HCT116 (cell line): ENCODE measurements at regions of chr4 and their contacts with region 1.

Region 1: DNA sequence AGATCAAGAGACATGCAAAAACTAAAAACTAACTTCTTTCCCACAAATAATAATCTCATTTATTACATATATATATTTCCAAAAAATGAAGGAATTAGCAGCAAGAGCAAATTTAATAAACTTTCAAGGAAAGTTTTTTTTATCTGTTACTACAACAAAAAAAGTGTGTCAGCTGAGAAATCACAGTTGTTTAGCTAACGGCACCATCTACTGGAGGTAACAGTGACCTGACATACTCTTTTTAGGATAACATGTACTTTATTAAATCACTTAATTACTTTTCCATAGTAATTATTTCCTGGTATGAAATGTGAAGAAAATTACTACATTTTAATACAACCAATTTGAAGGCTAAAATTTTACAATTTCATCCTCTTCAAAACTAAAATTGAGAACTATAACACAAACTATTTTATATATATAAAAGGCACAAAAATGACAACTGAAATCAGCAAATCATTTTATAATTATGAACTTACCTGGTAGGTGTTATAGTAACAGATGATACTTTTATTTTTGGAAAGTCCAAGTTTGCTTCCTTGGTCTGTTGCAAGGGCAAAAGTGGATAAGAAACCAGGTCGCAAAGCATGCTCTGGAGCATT is 9.1 kb downstream of the LAMTOR3 start:
- DNase-seq: peak; percentile 22
- ATAC-seq: no peak
- H3K4me3 ChIP-seq: no peak overlapping the region
- H3K27ac ChIP-seq: no peak overlapping the region
- H3K4me1 ChIP-seq: no peaks in the 10 kb centered on the region
- H3K27me3 ChIP-seq: no peaks in the 10 kb centered on the region
- CTCF ChIP-seq: peak; percentile 49 to 71 (median 62); a peak in 5 of 6 replicates
- POLR2A ChIP-seq: no peak
- RAD21 ChIP-seq: peak; percentile 83

Region 2: DNA sequence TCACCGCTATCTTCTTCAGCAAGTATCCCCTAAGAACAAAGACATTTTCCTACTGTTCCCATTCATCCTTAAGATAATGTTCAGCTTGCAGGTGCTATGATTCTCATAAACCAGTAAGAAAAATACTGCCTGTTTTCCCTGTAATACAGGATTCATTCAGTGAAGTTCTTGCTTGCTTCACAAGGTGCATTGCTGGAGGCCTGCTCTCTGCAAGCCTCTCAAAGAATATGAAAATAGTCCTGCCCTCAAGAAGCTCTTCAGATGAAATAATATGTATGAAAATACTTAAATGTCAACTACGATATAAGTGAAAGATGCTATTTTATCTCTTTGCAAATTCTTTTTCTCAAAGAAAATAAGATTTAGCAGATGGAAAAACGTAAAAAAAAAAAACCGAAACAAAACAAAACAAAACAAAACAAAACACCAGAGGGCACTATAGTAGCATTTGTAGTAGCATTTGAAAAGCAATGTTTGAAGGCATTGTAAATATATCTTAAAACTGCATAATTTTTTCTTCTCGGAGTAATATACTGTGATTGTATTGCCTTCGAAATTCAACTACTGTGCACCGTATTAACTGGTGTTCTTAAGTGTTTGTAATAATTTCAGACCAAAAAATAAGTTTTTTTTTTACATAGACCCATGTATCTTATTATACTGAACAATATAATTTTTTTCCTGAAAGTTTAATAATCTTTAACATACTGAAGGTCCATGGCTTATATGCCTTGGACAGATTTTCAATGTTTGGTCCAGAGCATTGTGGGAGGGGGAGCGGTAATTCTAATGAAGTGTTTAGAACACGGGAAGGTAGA is 767.1 kb before region 1 on chr4:
- CTCF ChIA-PET with region 1: no interaction called
- POLR2A ChIA-PET with region 1: no interaction called
- RAD21 ChIA-PET with region 1: no interaction called
- intact Hi-C with region 1: loop called (anchors 2 kb)
- DNase-seq: no peak
- ATAC-seq: no peak
- H3K4me3 ChIP-seq: no peak overlapping the region
- H3K27ac ChIP-seq: no peak overlapping the region
- H3K4me1 ChIP-seq: no peaks in the 10 kb centered on the region
- H3K27me3 ChIP-seq: no peaks in the 10 kb centered on the region
- CTCF ChIP-seq: peak; percentile 13 to 55 (median 40); a peak in 4 of 6 replicates
- POLR2A ChIP-seq: no peak
- RAD21 ChIP-seq: peak; percentile 52

Region 3: GRCh38 chr4:99314211-99314610 is 571.0 kb before region 1 on chr4:
- CTCF ChIA-PET with region 1: no interaction called
- POLR2A ChIA-PET with region 1: no interaction called
- RAD21 ChIA-PET with region 1: no interaction called
- intact Hi-C with region 1: no loop called
- DNase-seq: no peak
- ATAC-seq: no peak
- H3K4me3 ChIP-seq: no peak overlapping the region
- H3K27ac ChIP-seq: no peak overlapping the region
- H3K4me1 ChIP-seq: no peaks in the 10 kb centered on the region
- H3K27me3 ChIP-seq: no peaks in the 10 kb centered on the region
- CTCF ChIP-seq: no peak
- POLR2A ChIP-seq: no peak
- RAD21 ChIP-seq: no peak

Region 4: DNA sequence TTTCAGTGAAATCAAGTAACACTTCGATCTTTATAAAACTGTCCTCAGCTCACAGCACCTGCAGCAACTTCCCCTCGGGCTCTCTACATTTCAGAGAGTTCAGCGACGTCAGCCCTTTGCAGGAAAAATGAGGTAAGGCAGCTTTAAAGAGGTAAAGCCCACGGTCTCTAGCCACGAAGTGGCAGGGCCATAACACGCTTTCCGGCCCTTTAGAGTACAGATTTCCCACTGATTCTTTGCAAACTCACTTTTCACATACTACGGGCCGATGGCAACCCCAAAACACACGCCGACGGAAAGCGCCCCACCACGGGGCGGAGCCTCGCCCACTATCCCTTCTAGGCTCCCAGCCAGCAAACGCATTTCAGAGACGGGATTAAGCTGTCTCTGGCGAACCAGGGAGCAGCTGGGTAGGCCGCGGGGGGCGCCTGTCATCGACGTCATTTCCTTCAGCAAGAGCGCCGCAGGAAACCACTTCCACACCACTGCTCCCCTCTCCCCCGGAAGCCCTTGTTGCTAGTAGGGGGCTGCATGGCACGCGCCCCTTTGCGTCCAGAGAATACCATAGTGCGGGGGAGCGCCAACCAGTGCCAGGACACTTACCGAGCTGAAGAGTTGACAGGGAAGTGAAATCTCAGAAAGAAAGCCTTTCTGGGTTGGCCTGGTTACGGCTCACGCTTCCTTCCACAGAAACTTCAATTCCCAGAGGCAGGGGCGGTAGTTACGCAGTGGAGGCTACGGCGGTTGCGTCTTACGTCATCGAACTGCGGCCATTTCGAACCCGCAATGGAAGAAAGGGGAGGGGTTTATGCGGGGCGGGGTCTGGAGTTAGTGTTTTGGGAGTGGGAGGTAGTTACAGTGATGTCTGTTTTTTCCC is 321.6 kb before region 1 on chr4 and contains the start of gene TRMT10A:
- CTCF ChIA-PET with region 1: no interaction called
- POLR2A ChIA-PET with region 1: no interaction called
- RAD21 ChIA-PET with region 1: no interaction called
- intact Hi-C with region 1: loop called (anchors 1 kb)
- DNase-seq: peak; percentile 96
- ATAC-seq: peak; percentile 92
- H3K4me3 ChIP-seq: peak within 1 kb of the TSS; percentile 61 to 86
- H3K27ac ChIP-seq: peak within 1 kb of the TSS; percentile 75
- H3K4me1 ChIP-seq: peaks cover 0 to 18% of the 10 kb centered on the region in 2 experiments; a peak in 3 of 4 replicates
- H3K27me3 ChIP-seq: no peaks in the 10 kb centered on the region
- CTCF ChIP-seq: no peak
- POLR2A ChIP-seq: no peak
- RAD21 ChIP-seq: no peak
- total RNA-seq, gene TRMT10A: 7.4 TPM

Region 5: GRCh38 chr4:99723612-99724011 is 161.6 kb before region 1 on chr4:
- CTCF ChIA-PET with region 1: interaction called, 9 read pairs
- POLR2A ChIA-PET with region 1: no interaction called
- RAD21 ChIA-PET with region 1: no interaction called
- intact Hi-C with region 1: loop called (anchors 10 kb)
- DNase-seq: peak; percentile 10
- ATAC-seq: peak; percentile 89
- H3K4me3 ChIP-seq: no peak overlapping the region
- H3K27ac ChIP-seq: no peak overlapping the region
- H3K4me1 ChIP-seq: peaks cover 0 to 16% of the 10 kb centered on the region in 2 experiments; a peak in 2 of 4 replicates
- H3K27me3 ChIP-seq: no peaks in the 10 kb centered on the region
- CTCF ChIP-seq: no peak
- POLR2A ChIP-seq: no peak
- RAD21 ChIP-seq: no peak

Region 6: DNA sequence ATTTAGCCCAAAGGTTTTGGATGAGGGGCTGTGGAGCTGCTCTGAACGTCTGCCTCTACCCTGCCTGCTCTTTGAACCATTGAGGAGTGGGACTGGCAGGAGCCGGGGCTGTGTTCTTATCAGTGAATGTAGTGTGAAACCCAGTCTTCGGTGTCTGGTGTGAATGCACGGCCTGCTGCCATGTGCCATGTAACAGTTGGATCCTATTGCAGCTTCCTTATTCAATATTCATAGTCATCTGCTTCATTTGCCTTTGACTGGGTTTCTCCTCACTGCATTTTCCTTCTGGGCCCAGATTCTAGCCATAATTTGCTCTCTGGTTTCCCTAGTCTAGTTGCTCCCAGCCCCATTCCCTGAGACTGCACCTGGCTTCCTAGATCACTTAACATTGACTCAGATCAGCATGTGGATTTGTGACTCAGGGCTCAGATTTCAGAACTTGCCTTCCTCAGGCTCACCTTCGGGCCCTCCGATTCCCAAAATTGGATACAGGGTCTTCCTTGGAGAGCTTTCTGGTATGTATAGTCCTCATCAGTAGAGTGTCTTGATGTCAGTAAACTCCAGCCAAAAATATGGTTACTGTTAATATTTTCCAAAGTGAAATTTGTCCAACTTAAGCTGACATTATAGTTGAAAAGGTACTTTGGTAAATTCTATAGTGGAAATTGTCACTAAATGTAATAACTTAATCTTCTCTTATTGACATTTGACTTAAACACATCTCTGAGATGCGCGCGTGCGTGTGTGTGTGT is 399.1 kb after region 1 on chr4:
- CTCF ChIA-PET with region 1: no interaction called
- POLR2A ChIA-PET with region 1: no interaction called
- RAD21 ChIA-PET with region 1: no interaction called
- intact Hi-C with region 1: no loop called
- DNase-seq: no peak
- ATAC-seq: no peak
- H3K4me3 ChIP-seq: no peak overlapping the region
- H3K27ac ChIP-seq: no peak overlapping the region
- H3K4me1 ChIP-seq: peaks cover 0 to under 1% of the 10 kb centered on the region in 2 experiments; a peak in 1 of 4 replicates
- H3K27me3 ChIP-seq: no peaks in the 10 kb centered on the region
- CTCF ChIP-seq: no peak
- POLR2A ChIP-seq: no peak
- RAD21 ChIP-seq: no peak